PC-9 (cell line): ENCODE measurements at regions of chr7 and their contacts with region 1.

Region 1: DNA sequence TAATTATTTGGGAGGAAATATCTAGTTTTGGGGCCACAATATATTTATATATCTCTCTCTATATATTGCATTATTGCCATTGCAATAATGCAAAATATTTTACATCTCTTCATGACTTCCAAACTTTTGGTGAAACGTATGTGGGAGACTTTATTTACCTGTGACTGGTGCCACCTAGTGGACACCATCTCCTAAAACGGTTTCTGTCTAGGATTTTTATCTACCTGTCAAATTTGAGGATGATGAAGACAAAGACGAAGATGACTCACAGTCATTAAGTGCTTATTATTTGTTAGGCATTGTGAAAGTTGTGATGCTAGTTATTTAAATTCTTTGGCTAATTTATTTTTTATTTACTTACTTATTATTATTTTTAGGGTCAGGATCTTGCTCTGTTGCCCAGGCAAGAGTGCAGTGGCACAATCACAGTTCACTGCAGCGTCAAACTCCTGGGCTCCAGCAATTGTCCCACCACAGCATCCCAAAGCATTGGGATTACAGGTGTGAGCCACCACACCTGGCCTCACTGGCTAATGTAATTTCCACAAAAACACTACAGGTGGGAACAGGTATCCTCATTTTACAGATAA is 18.7 kb upstream of the CBLL1 start:
- DNase-seq: peak; percentile 45 to 73
- H3K4me3 ChIP-seq: no peak overlapping the region
- H3K27ac ChIP-seq: no peak overlapping the region
- H3K4me1 ChIP-seq: no peaks in the 10 kb centered on the region
- H3K27me3 ChIP-seq: no peaks in the 10 kb centered on the region
- CTCF ChIP-seq: peak; percentile 86

Region 2: GRCh38 chr7:106947244-106947728 is 778.0 kb before region 1 on chr7:
- CTCF ChIA-PET with region 1: no interaction called
- POLR2A ChIA-PET with region 1: no interaction called
- intact Hi-C with region 1: loop called (anchors 5 kb)
- DNase-seq: peak; percentile 50 to 60
- H3K4me3 ChIP-seq: no peak overlapping the region
- H3K27ac ChIP-seq: no peak overlapping the region
- H3K4me1 ChIP-seq: no peaks in the 10 kb centered on the region
- H3K27me3 ChIP-seq: no peaks in the 10 kb centered on the region; the same call in 1 of the 2 replicates
- CTCF ChIP-seq: peak; percentile 75

Region 3: GRCh38 chr7:107201795-107202450 is 523.3 kb before region 1 on chr7:
- CTCF ChIA-PET with region 1: no interaction called
- POLR2A ChIA-PET with region 1: no interaction called
- intact Hi-C with region 1: loop called (anchors 1 kb)
- DNase-seq: peak in 1 of 2 experiments; percentile 55
- H3K4me3 ChIP-seq: no peak overlapping the region
- H3K27ac ChIP-seq: no peak overlapping the region
- H3K4me1 ChIP-seq: no peaks in the 10 kb centered on the region
- H3K27me3 ChIP-seq: no peaks in the 10 kb centered on the region
- CTCF ChIP-seq: peak; percentile 67

Region 4: DNA sequence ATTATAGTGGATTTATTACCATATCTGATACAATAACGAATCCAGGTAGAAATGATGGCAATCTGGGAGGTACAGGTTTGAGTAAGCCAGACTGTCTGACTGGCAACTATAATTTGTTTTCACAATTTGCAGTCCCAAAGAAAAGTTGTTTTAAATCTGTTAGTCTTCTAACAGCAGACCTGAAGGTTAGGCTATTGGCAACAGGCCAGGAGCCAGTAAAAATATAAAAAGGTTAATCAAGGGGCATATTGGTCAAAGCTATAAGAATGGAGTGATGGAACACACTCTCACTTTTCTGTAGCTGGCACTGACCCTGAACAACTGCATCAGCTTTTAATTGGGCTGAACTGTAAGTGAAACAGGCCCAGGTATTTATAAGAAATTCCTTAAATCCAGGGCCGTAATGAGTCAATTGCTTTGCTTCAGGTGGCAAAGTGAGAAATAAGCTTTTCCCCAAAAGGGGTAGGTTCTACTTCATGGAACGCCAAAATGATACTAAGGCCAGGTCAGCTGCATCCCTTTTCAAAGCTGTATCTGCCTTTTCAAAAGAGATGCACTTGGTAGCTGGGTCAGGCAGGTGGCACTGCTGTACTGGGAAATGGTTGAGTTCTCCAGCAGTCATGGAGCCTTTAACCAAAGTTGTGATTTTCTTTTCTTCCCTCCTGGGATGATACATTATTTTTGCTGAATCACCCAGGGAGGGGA is 262.4 kb before region 1 on chr7:
- CTCF ChIA-PET with region 1: interaction called, 5 read pairs
- POLR2A ChIA-PET with region 1: no interaction called
- intact Hi-C with region 1: loop called (anchors 1 kb)
- DNase-seq: peak; percentile 60 to 65
- H3K4me3 ChIP-seq: no peak overlapping the region
- H3K27ac ChIP-seq: no peak overlapping the region
- H3K4me1 ChIP-seq: peaks cover 8% of the 10 kb centered on the region
- H3K27me3 ChIP-seq: no peaks in the 10 kb centered on the region
- CTCF ChIP-seq: peak; percentile 90

Region 5: DNA sequence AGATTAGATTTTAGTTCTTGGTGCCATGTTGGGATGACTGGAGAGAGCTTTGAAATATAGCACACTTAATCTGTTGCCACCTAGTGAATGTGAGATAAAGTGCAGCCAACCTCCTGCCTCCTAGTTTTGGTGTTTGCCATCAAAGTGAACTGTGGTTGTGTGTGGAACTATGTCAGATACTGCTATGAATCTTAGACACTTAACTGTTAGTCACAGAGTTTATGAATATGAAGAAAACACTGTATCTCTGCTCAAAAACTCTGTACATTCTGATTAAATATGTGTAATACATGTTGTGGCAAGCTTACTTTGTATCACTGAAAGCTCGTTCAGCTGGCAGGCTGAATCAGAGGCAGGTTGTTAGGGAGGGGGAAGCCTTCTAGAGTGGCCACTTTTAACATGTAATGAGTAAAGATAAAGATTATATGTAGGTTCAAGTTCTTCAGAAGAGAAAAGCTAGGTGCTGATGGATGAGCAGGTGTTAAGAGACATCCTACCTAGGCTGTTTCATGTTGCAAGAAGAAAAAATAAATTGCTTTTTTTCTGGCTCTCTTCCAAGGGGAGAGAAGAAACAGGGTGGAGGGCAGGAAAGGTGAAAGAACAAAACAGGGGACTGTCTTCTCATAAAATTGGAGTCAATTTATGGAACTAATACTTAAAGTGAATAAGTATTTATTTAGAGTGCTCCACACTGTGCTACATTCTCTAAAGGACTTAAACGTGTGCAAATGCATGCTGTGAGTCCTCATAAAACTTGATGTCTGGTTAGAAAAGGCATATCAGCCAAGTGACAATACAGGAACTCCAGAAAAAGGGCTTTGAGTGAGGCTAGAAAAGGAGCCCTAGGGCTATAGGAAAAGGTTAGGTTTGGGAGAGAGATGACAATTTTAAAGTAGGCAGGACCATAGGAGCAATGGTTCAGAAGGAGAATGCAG is 291.9 kb after region 1 on chr7:
- CTCF ChIA-PET with region 1: no interaction called
- POLR2A ChIA-PET with region 1: no interaction called
- intact Hi-C with region 1: no loop called
- DNase-seq: no peak
- H3K4me3 ChIP-seq: no peak overlapping the region
- H3K27ac ChIP-seq: no peak overlapping the region
- H3K4me1 ChIP-seq: peaks cover 44% of the 10 kb centered on the region
- H3K27me3 ChIP-seq: no peaks in the 10 kb centered on the region
- CTCF ChIP-seq: peak; percentile 59